GM12878 (cell line): ENCODE measurements at regions of chr1 and their contacts with region 1.

Region 1: GRCh38 chr1:104932030-104932915 is 1182.6 kb downstream of the AMY1C start:
- DNase-seq: no peak
- ATAC-seq: peak; percentile 77
- H3K4me3 ChIP-seq: no peak overlapping the region
- H3K27ac ChIP-seq: no peak overlapping the region
- H3K4me1 ChIP-seq: peaks cover 6% of the 10 kb centered on the region
- H3K27me3 ChIP-seq: no peaks in the 10 kb centered on the region
- CTCF ChIP-seq: no peak
- EP300 ChIP-seq: peak; percentile 35 to 36; a peak in 2 of 4 replicates
- POLR2A ChIP-seq: no peak
- RAD21 ChIP-seq: no peak

Region 2: GRCh38 chr1:104825401-104825800 is 106.9 kb before region 1 on chr1:
- CTCF ChIA-PET with region 1: no interaction called
- POLR2A ChIA-PET with region 1: no interaction called
- RAD21 ChIA-PET with region 1: no interaction called
- SMC1A ChIA-PET with region 1: no interaction called
- in situ Hi-C with region 1: no loop called
- intact Hi-C with region 1: no loop called
- DNase-seq: no peak
- ATAC-seq: no peak
- H3K4me3 ChIP-seq: no peak overlapping the region
- H3K27ac ChIP-seq: no peak overlapping the region
- H3K4me1 ChIP-seq: no peaks in the 10 kb centered on the region
- H3K27me3 ChIP-seq: no peaks in the 10 kb centered on the region
- CTCF ChIP-seq: no peak
- EP300 ChIP-seq: no peak
- POLR2A ChIP-seq: no peak
- RAD21 ChIP-seq: no peak

Region 3: GRCh38 chr1:104953555-104953954 is 21.3 kb after region 1 on chr1:
- CTCF ChIA-PET with region 1: no interaction called
- POLR2A ChIA-PET with region 1: no interaction called
- RAD21 ChIA-PET with region 1: no interaction called
- SMC1A ChIA-PET with region 1: no interaction called
- in situ Hi-C with region 1: no loop called
- intact Hi-C with region 1: no loop called
- DNase-seq: no peak
- ATAC-seq: no peak
- H3K4me3 ChIP-seq: no peak overlapping the region
- H3K27ac ChIP-seq: no peak overlapping the region
- H3K4me1 ChIP-seq: no peaks in the 10 kb centered on the region
- H3K27me3 ChIP-seq: no peaks in the 10 kb centered on the region
- CTCF ChIP-seq: no peak
- EP300 ChIP-seq: no peak
- POLR2A ChIP-seq: no peak
- RAD21 ChIP-seq: no peak

Region 4: GRCh38 chr1:104987210-104987609 is 54.9 kb after region 1 on chr1:
- CTCF ChIA-PET with region 1: no interaction called
- POLR2A ChIA-PET with region 1: no interaction called
- RAD21 ChIA-PET with region 1: no interaction called
- SMC1A ChIA-PET with region 1: interaction called, 10 read pairs
- in situ Hi-C with region 1: no loop called
- intact Hi-C with region 1: no loop called
- DNase-seq: peak; percentile 42
- ATAC-seq: peak; percentile 98
- H3K4me3 ChIP-seq: no peak overlapping the region
- H3K27ac ChIP-seq: no peak overlapping the region; the same call in 1 of the 2 replicates
- H3K4me1 ChIP-seq: no peaks in the 10 kb centered on the region
- H3K27me3 ChIP-seq: no peaks in the 10 kb centered on the region
- CTCF ChIP-seq: no peak
- EP300 ChIP-seq: peak; percentile 74 to 82; a peak in 3 of 4 replicates
- POLR2A ChIP-seq: no peak
- RAD21 ChIP-seq: no peak